ENCODE measurements at regions of chr6 and their contacts with region 1.

Region 1: GRCh38 chr6:124205921-124206320 is 402.3 kb downstream of the NKAIN2 start:
- DNase-seq: no peak
- H3K4me3 ChIP-seq: no peak overlapping the region
- CTCF ChIP-seq: no peak
- POLR2A ChIP-seq: no peak

Region 2: DNA sequence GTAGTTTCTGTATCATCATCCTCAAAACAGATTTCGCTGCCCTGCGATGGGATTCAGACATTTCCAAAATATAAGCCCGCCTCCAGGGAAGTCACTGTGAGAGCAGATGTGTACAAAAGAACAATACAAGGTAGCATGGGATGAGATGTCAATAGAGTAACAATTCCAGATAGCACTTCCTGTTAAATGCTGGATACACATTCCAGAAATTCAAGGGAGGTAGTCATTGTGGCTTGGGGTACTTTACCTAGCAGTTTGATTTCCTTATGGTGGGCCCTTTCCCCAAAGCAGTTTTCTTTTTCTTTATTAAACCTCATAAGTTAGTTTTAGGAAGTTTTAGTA is 758.8 kb after region 1 on chr6:
- intact Hi-C with region 1: loop called (anchors 5 kb)
- DNase-seq: no peak
- H3K4me3 ChIP-seq: no peak overlapping the region
- CTCF ChIP-seq: no peak
- POLR2A ChIP-seq: no peak

Measured in lower leg skin (tissue), 4 donors.